ENCODE measurements at regions of chrX and their contacts with region 1.

Region 1: GRCh38 chrX:65581661-65582339 is 47.2 kb upstream of the LAS1L start:
- DNase-seq: peak in 1 of 2 donors; percentile 61
- ATAC-seq: peak; percentile 90
- H3K4me3 ChIP-seq: no peak overlapping the region
- H3K27ac ChIP-seq: no peak overlapping the region
- H3K4me1 ChIP-seq: no peaks in the 10 kb centered on the region
- H3K27me3 ChIP-seq: no peaks in the 10 kb centered on the region

Region 2: DNA sequence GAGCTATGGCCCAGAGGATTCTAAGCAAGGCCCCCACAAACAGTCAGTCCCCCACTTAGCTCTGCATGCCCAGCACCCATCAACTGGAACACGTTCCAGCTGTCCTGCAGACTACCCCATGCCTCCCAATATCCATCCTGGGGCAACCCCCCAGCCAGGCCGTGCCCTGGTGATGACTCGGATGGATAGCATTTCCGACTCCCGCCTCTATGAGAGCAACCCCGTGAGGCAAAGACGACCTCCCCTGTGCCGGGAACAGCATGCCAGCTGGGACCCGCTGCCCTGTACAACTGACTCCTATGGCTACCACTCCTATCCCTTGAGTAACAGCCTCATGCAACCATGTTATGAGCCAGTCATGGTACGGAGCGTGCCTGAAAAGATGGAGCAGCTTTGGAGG is 79.2 kb before region 1 on chrX:
- intact Hi-C with region 1: no loop called
- DNase-seq: no peak
- ATAC-seq: no peak
- H3K4me3 ChIP-seq: no peak overlapping the region
- H3K27ac ChIP-seq: no peak overlapping the region
- H3K4me1 ChIP-seq: no peaks in the 10 kb centered on the region
- H3K27me3 ChIP-seq: no peaks in the 10 kb centered on the region

Region 3: GRCh38 chrX:65536291-65536690 is 45.5 kb before region 1 on chrX:
- intact Hi-C with region 1: no loop called
- DNase-seq: no peak
- ATAC-seq: no peak
- H3K4me3 ChIP-seq: no peak overlapping the region
- H3K27ac ChIP-seq: no peak overlapping the region
- H3K4me1 ChIP-seq: no peaks in the 10 kb centered on the region
- H3K27me3 ChIP-seq: no peaks in the 10 kb centered on the region

Region 4: DNA sequence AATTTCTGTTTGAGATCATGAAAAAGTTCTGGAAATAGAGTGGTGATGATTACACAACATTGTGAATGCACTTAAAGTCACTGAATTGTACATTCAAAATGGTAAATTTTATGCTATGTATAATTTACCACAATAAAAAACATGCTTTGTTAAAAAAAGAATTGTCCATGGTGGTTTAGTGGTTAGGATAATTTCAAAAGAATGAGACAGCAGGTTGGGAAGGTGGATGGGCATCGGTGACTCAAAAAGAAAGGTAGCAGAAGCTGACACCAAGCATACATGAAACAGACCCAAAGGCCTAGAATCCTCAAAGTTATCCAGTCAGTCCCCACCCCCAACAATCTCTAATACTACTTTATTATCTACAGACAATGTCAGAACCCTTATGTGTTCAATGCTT is 176.7 kb after region 1 on chrX:
- intact Hi-C with region 1: no loop called
- DNase-seq: no peak
- ATAC-seq: no peak
- H3K4me3 ChIP-seq: no peak overlapping the region
- H3K27ac ChIP-seq: no peak overlapping the region
- H3K4me1 ChIP-seq: no peaks in the 10 kb centered on the region
- H3K27me3 ChIP-seq: no peaks in the 10 kb centered on the region

Region 5: GRCh38 chrX:65985922-65986588 is 404.3 kb after region 1 on chrX:
- intact Hi-C with region 1: loop called (anchors 1 to 2 kb)
- DNase-seq: no peak
- ATAC-seq: peak; percentile 85
- H3K4me3 ChIP-seq: no peak overlapping the region
- H3K27ac ChIP-seq: no peak overlapping the region
- H3K4me1 ChIP-seq: no peaks in the 10 kb centered on the region
- H3K27me3 ChIP-seq: no peaks in the 10 kb centered on the region